ENCODE measurements at regions of chr1 and their contacts with region 1.

Region 1: GRCh38 chr1:63367215-63368103 is at the start of gene ALG6:
- DNase-seq: peak; percentile 85 to 97
- ATAC-seq: peak; percentile 92 to 94
- H3K4me3 ChIP-seq: peak within 1 kb of the TSS; percentile 81 to 95 (median 88)
- H3K27ac ChIP-seq: peak within 1 kb of the TSS; percentile 86 to 91 (median 90)
- H3K4me1 ChIP-seq: peaks cover 5 to 9% of the 10 kb centered on the region in 2 donors
- H3K27me3 ChIP-seq: no peaks in the 10 kb centered on the region
- CTCF ChIP-seq: peak in 1 of 5 experiments; percentile 15
- POLR2A ChIP-seq: peak; percentile 72 to 78
- total RNA-seq, gene ALG6: 2.3 to 9.5 (median 5.7) TPM

Region 2: DNA sequence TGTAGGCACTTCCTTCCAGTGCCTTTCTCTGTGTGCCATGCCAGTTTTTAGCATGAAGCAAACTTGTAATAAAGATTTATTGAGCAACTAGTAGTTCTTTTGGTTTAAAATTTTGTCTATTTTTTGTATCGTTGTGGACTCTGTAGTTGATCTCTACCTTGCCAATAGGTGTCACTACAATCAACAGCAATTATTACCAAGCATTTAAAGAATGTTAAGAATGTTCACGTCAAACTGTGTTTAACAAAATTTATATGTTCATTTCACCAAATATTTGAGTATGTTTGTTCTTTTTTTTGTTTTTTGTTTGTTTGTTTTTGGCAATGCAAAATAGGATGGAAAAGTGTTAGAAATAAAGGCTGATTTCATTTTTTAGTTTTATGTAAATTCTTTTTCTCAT is 1417.0 kb before region 1 on chr1:
- in situ Hi-C with region 1: no loop called
- intact Hi-C with region 1: no loop called
- DNase-seq: no peak
- ATAC-seq: no peak
- H3K4me3 ChIP-seq: no peak overlapping the region
- H3K27ac ChIP-seq: no peak overlapping the region
- H3K4me1 ChIP-seq: peaks cover 15 to 26% of the 10 kb centered on the region in 2 donors
- H3K27me3 ChIP-seq: no peaks in the 10 kb centered on the region
- CTCF ChIP-seq: peak in 2 of 5 experiments; percentile 18 to 28
- POLR2A ChIP-seq: no peak

Region 3: DNA sequence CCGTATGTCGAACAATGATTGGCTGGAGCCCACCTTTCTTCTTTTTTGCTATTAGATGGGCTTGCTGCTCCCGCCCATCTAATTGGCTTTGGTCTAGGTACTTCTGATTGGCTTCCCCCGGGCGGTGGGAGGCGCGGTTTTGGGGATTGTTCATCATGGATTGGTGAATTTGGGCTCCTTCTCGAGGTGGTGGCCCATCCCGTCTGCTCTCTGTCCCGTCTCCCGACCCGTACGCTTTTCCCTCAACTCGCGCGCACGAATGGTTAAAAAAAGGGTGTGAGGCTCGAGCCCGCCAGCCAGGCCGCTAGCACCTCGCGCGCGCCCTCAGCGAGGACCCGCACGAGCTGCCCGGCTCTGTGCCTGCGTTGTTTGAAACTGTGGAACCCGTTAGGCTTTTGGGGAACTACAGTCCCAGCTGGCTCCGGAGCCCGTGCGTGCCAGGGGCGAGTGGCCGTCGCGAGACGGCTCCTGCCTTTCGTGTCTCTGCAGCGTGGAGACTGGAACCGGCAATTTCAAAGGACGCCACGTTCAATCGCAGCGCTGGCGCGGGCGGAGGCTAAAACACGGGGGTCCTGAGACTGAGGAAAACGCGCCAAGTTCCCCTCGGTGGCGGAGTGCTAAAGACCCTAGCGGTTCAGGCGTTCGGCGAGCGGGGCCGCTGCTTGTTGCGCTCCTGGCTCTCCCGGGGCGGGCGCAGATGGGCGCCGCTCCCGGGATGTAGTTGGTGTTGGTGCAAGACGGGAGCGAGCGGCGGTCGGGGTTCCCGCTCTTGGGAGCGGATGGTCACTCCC is 930.8 kb before region 1 on chr1 and contains the start of gene USP1:
- in situ Hi-C with region 1: no loop called
- intact Hi-C with region 1: loop called (anchors 10 kb)
- DNase-seq: peak; percentile 96 to 98
- ATAC-seq: peak; percentile 91 to 92
- H3K4me3 ChIP-seq: peak within 1 kb of the TSS; percentile 87 to 94 (median 92)
- H3K27ac ChIP-seq: peak within 1 kb of the TSS; percentile 94 to 99 (median 99)
- H3K4me1 ChIP-seq: peaks cover 22 to 32% of the 10 kb centered on the region in 2 donors
- H3K27me3 ChIP-seq: no peaks in the 10 kb centered on the region
- CTCF ChIP-seq: no peak
- POLR2A ChIP-seq: peak; percentile 54 to 77
- total RNA-seq, gene USP1: 11.8 to 23.4 (median 17.3) TPM

Region 4: GRCh38 chr1:63248216-63248615 is 119.2 kb before region 1 on chr1:
- in situ Hi-C with region 1: no loop called
- intact Hi-C with region 1: no loop called
- DNase-seq: no peak
- ATAC-seq: no peak
- H3K4me3 ChIP-seq: no peak overlapping the region
- H3K27ac ChIP-seq: no peak overlapping the region
- H3K4me1 ChIP-seq: no peaks in the 10 kb centered on the region
- H3K27me3 ChIP-seq: no peaks in the 10 kb centered on the region
- CTCF ChIP-seq: no peak
- POLR2A ChIP-seq: no peak

Region 5: DNA sequence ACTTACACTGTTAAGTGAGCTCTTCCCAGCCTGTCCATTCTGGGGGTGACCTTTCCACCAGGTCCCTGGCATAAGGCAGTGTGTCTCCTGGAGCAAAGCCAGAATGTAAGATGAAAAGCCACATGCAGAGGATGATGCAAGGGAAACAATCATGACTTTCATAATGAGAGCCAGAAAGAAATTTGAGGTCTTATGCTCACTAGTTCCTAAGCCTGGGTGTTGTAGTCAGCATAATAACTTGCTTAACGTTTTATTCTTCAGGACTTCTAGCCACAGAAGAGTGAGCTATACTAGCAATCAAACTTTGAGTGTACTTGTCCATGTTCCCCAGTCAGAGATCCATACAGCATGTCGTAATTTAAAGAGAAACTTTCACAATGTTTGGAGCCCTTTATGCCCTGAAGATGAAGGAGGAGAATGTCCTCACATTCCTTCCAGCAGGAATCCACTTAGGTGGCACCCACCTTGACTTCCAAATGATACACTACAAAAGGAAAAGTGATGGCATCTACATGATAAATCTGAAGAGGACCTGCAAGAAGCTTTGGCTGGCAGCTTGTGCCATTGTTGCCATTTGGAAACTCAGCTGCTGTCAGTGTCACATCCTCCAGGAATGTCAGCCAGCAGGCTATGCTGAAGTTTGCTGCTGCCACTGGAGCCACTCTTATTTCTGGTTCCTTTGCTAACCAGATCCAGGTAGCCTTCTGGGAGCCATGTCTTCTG is 105.6 kb before region 1 on chr1:
- in situ Hi-C with region 1: no loop called
- intact Hi-C with region 1: loop called (anchors 10 kb)
- DNase-seq: peak; percentile 56 to 84
- ATAC-seq: peak; percentile 92 to 96
- H3K4me3 ChIP-seq: no peak overlapping the region
- H3K27ac ChIP-seq: peak overlapping the region; percentile 64 to 83 (median 81)
- H3K4me1 ChIP-seq: peaks cover 30 to 38% of the 10 kb centered on the region in 2 donors
- H3K27me3 ChIP-seq: no peaks in the 10 kb centered on the region
- CTCF ChIP-seq: no peak
- POLR2A ChIP-seq: no peak

Region 6: DNA sequence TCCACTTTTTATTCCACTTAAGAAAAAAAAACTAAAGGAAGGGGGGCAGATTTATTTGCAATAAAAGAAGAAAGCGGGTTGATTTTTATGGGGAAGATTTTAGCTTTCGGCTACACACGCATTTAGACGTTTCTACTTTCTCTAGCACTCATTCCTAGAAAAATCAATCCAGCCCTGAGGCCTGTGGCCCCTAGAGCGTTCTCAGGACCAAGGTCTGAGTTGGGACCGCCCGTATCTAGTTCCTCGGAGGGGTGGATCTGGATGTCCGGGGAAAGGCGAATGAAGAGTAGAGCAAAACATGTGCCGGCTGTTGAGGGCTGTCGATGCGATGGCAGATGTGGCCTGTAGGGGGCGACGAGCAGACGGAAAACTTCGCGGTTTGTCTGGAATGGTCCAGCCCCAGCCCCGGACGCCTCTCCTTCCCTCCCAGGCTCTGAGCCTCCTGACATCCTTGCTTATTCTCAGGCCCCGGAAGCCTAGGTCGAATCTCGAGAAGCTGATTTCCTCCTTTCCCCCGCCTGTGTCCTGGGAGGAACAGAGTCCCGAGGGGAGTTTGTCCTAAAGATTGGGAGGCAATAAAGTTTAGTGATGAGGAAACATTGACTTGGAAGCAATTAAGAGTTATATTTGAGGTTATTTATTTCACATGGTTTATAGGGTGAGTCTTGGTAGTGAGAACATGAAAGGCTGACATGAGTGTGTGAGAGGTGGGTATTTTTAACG is 39.9 kb before region 1 on chr1:
- in situ Hi-C with region 1: no loop called
- intact Hi-C with region 1: loop called (anchors 5 kb)
- DNase-seq: peak in 1 of 2 donors; percentile 53
- ATAC-seq: peak; percentile 65 to 66
- H3K4me3 ChIP-seq: no peak overlapping the region
- H3K27ac ChIP-seq: no peak overlapping the region
- H3K4me1 ChIP-seq: peaks cover 4 to 6% of the 10 kb centered on the region in 2 donors
- H3K27me3 ChIP-seq: peaks cover 95 to 96% (median 95%) of the 10 kb centered on the region in 3 donors
- CTCF ChIP-seq: peak; percentile 54 to 73 (median 63)
- POLR2A ChIP-seq: no peak

Region 7: GRCh38 chr1:63522891-63523728 is 155.7 kb after region 1 on chr1 and contains the starts of genes EFCAB7 and ITGB3BP:
- in situ Hi-C with region 1: no loop called
- intact Hi-C with region 1: loop called (anchors 10 kb)
- DNase-seq: peak; percentile 66 to 75
- ATAC-seq: peak; percentile 89 to 92
- H3K4me3 ChIP-seq: peak within 1 kb of the TSS; percentile 67 to 82 (median 76)
- H3K27ac ChIP-seq: peak within 1 kb of the TSS; percentile 77 to 84 (median 82)
- H3K4me1 ChIP-seq: peaks cover 8 to 11% of the 10 kb centered on the region in 2 donors
- H3K27me3 ChIP-seq: no peaks in the 10 kb centered on the region
- CTCF ChIP-seq: no peak
- POLR2A ChIP-seq: peak in 1 of 2 donors; percentile 26
- total RNA-seq, gene EFCAB7: 2.2 to 6.8 (median 3.5) TPM
- total RNA-seq, gene ITGB3BP: 1.6 to 6.1 (median 3.9) TPM

Region 8: GRCh38 chr1:63593303-63593885 is 225.9 kb after region 1 on chr1 and contains the start of gene PGM1:
- in situ Hi-C with region 1: no loop called
- intact Hi-C with region 1: loop called (anchors 5 kb)
- DNase-seq: peak; percentile 51 to 86
- ATAC-seq: peak; percentile 57 to 63
- H3K4me3 ChIP-seq: peak within 1 kb of the TSS; percentile 74 to 85 (median 78)
- H3K27ac ChIP-seq: peak within 1 kb of the TSS; percentile 91 to 99 (median 96)
- H3K4me1 ChIP-seq: peaks cover 47 to 57% of the 10 kb centered on the region in 2 donors
- H3K27me3 ChIP-seq: no peaks in the 10 kb centered on the region
- CTCF ChIP-seq: no peak
- POLR2A ChIP-seq: peak; percentile 60 to 76
- total RNA-seq, gene PGM1: 320 to 713 (median 666) TPM

Measured in gastrocnemius medialis (tissue), 4 donors.